ENCODE measurements at regions of chr12 and their contacts with region 1.

Region 1: GRCh38 chr12:116295327-116296263 is 18.1 kb upstream of the MED13L start:
- DNase-seq: no peak
- ATAC-seq: no peak
- H3K4me3 ChIP-seq: no peak overlapping the region
- H3K27ac ChIP-seq: no peak overlapping the region
- H3K4me1 ChIP-seq: peaks cover 7% of the 10 kb centered on the region
- H3K27me3 ChIP-seq: no peaks in the 10 kb centered on the region
- CTCF ChIP-seq: no peak

Region 2: GRCh38 chr12:116389990-116390389 is 94.4 kb after region 1 on chr12:
- CTCF ChIA-PET with region 1: no interaction called
- POLR2A ChIA-PET with region 1: interaction called, 10 read pairs
- intact Hi-C with region 1: no loop called
- DNase-seq: peak; percentile 100
- ATAC-seq: peak; percentile 84
- H3K4me3 ChIP-seq: no peak overlapping the region; the same call in 1 of the 2 replicates
- H3K27ac ChIP-seq: peak overlapping the region; percentile 95
- H3K4me1 ChIP-seq: peaks cover 37% of the 10 kb centered on the region
- H3K27me3 ChIP-seq: no peaks in the 10 kb centered on the region
- CTCF ChIP-seq: no peak

Region 3: GRCh38 chr12:116508145-116509121 is 212.8 kb after region 1 on chr12:
- CTCF ChIA-PET with region 1: no interaction called
- POLR2A ChIA-PET with region 1: no interaction called
- intact Hi-C with region 1: no loop called
- DNase-seq: peak; percentile 26
- ATAC-seq: peak; percentile 77
- H3K4me3 ChIP-seq: peak overlapping the region; percentile 69
- H3K27ac ChIP-seq: peak overlapping the region; percentile 34
- H3K4me1 ChIP-seq: peaks cover 9% of the 10 kb centered on the region; the same call in 1 of the 2 replicates
- H3K27me3 ChIP-seq: no peaks in the 10 kb centered on the region
- CTCF ChIP-seq: no peak